Heart left ventricle (tissue), 16 donors: ENCODE measurements at regions of chr3 and their contacts with region 1.

Region 1: DNA sequence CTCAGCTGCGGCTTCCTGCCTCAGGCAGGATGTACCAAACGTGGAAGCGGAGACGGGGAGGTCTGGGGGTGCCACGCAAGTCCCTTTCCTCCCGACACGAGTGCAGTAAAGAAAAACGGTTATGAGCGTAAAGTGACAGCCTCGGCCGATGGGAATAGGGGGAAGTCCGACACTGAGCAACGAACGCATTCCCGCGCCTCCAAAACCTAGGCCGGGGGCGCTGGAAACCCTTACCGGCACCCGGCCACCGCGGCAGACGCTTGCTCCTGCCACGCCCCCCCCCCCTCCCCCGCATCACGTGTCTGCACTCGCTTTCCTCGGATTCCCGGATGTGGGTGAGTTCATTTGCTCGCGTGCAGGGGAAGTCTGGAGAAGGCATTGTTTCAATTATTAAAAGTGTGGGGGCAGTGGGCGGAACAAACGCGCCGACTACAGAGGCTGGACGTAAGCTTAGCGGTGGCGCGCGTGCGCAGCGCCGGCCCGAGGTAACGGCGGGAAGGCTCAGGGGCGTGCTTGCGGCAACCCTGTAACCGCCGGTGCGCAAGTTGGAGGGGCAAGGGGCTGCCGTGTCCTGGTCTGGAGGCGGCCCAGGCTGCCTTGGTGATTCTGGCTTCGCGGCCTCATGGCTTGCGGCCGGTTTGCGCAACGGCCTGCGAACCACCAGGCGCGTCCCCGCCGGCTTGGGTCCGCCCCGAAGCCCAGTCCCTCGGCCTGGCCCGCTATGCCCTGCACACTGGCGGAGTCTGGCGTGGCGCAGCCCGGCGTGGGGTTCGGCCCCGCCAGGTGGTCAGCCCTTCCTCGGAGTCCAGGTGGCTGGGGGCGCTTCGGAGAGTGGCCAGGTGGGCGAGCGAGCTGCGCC is at the starts of genes ANAPC13 and CEP63:
- DNase-seq: peak; percentile 93 to 96 (median 95)
- ATAC-seq: peak; percentile 92 to 96 (median 93)
- H3K4me3 ChIP-seq: peak within 1 kb of the TSS; percentile 61 to 96 (median 80)
- H3K27ac ChIP-seq: peak within 1 kb of the TSS; percentile 81 to 99 (median 96)
- H3K4me1 ChIP-seq: peaks cover 7 to 53% (median 34%) of the 10 kb centered on the region in 12 donors
- H3K27me3 ChIP-seq: no peaks in the 10 kb centered on the region
- CTCF ChIP-seq: no peak
- POLR2A ChIP-seq: no peak
- total RNA-seq, gene ANAPC13: 53.4 to 109 (median 81.3) TPM
- total RNA-seq, gene CEP63: 19.1 to 35.3 (median 30.3) TPM

Region 2: GRCh38 chr3:133812872-133813271 is 673.1 kb before region 1 on chr3:
- intact Hi-C with region 1: loop called in 1 of 10 experiments (anchors 10 kb)
- DNase-seq: no peak
- ATAC-seq: peak in 1 of 4 donors; percentile 60
- H3K4me3 ChIP-seq: no peak overlapping the region
- H3K27ac ChIP-seq: no peak overlapping the region
- H3K4me1 ChIP-seq: peaks cover 0 to 10% (median 0%) of the 10 kb centered on the region in 12 donors
- H3K27me3 ChIP-seq: no peaks in the 10 kb centered on the region
- CTCF ChIP-seq: no peak
- POLR2A ChIP-seq: no peak

Region 3: GRCh38 chr3:134197681-134198261 is 288.2 kb before region 1 on chr3:
- intact Hi-C with region 1: loop called in 1 of 10 experiments (anchors 5 kb)
- DNase-seq: no peak
- ATAC-seq: peak; percentile 52 to 82 (median 80)
- H3K4me3 ChIP-seq: no peak overlapping the region
- H3K27ac ChIP-seq: no peak overlapping the region
- H3K4me1 ChIP-seq: peaks cover 0 to 8% (median 0%) of the 10 kb centered on the region in 12 donors
- H3K27me3 ChIP-seq: no peaks in the 10 kb centered on the region
- CTCF ChIP-seq: peak; percentile 58 to 84 (median 71)
- POLR2A ChIP-seq: no peak